ENCODE measurements at regions of chr14 and their contacts with region 1.

Region 1: GRCh38 chr14:75976826-75977581 is 4.8 kb downstream of the TGFB3 start:
- DNase-seq: no peak
- ATAC-seq: no peak
- H3K4me3 ChIP-seq: no peak overlapping the region
- H3K27ac ChIP-seq: no peak overlapping the region
- H3K4me1 ChIP-seq: peaks cover 7% of the 10 kb centered on the region; the same call in 1 of the 2 replicates
- H3K27me3 ChIP-seq: no peaks in the 10 kb centered on the region; the same call in none of the 2 replicates
- CTCF ChIP-seq: no peak
- POLR2A ChIP-seq: no peak
- RAD21 ChIP-seq: no peak

Region 2: GRCh38 chr14:75714991-75715390 is 262.0 kb before region 1 on chr14:
- CTCF ChIA-PET with region 1: interaction called, 63 read pairs
- POLR2A ChIA-PET with region 1: no interaction called
- dilution Hi-C with region 1: no loop called
- in situ Hi-C with region 1: loop called (anchors 5 kb)
- intact Hi-C with region 1: loop called (anchors 1 kb)
- DNase-seq: no peak
- ATAC-seq: no peak
- H3K4me3 ChIP-seq: no peak overlapping the region
- H3K27ac ChIP-seq: no peak overlapping the region
- H3K4me1 ChIP-seq: peaks cover 16% of the 10 kb centered on the region
- H3K27me3 ChIP-seq: peaks cover 16% of the 10 kb centered on the region; the same call in 1 of the 2 replicates
- CTCF ChIP-seq: no peak
- POLR2A ChIP-seq: no peak
- RAD21 ChIP-seq: no peak

Region 3: DNA sequence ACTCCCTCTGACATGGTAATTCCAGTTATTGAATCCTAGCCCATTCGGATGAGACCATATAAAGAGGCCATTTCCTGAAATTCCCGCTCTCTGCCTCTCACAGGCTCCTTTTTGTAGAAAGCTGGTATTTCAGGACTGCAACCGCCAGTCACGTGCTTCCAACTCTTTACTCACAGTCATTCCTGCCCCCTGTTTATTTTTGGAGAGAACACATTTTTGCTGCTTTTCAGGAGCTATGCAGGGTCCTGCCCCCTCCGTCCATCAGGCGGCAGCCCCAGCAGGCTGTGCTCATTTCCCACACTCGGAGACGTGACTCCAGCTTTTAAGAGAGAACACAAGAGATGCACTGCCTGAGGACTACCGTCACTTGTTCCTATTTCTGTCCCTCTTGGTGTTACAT is 35.4 kb after region 1 on chr14:
- CTCF ChIA-PET with region 1: no interaction called
- POLR2A ChIA-PET with region 1: no interaction called
- dilution Hi-C with region 1: no loop called
- in situ Hi-C with region 1: no loop called
- intact Hi-C with region 1: no loop called
- DNase-seq: peak; percentile 87
- ATAC-seq: peak; percentile 89
- H3K4me3 ChIP-seq: no peak overlapping the region
- H3K27ac ChIP-seq: peak overlapping the region; percentile 4; the same call in 1 of the 2 replicates
- H3K4me1 ChIP-seq: peaks cover 16% of the 10 kb centered on the region
- H3K27me3 ChIP-seq: no peaks in the 10 kb centered on the region
- CTCF ChIP-seq: 0 out of 2 replicates have a peak, but pooled peaks have one; percentile 10
- POLR2A ChIP-seq: no peak
- RAD21 ChIP-seq: peak; percentile 3; the same call in 1 of the 2 replicates

Region 4: GRCh38 chr14:76034566-76034965 is 57.6 kb after region 1 on chr14:
- CTCF ChIA-PET with region 1: no interaction called
- POLR2A ChIA-PET with region 1: interaction called, 10 read pairs
- dilution Hi-C with region 1: no loop called
- in situ Hi-C with region 1: no loop called
- intact Hi-C with region 1: no loop called
- DNase-seq: no peak
- ATAC-seq: no peak
- H3K4me3 ChIP-seq: no peak overlapping the region
- H3K27ac ChIP-seq: no peak overlapping the region
- H3K4me1 ChIP-seq: no peaks in the 10 kb centered on the region
- H3K27me3 ChIP-seq: no peaks in the 10 kb centered on the region
- CTCF ChIP-seq: no peak
- POLR2A ChIP-seq: no peak
- RAD21 ChIP-seq: no peak

Region 5: DNA sequence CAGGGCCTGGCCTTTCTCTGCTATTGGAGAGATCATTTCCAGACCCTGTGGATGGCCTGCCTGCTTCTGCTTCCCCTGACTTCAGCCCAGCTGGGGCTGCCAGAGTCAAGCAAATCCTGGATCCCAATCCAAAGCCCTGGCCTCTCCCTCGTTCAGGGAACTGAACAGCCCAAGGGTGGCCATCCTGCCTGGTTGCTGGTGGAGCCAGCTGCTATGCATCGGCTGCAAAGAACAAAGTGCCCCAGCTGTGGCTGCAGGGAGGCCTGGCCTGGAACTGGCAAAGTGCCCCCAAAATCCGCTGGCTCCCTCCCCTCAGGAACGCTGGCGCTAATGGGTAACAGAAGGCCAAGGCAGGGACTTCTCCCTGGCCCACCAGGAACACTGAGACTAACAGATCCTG is 905.6 kb after region 1 on chr14:
- CTCF ChIA-PET with region 1: no interaction called
- POLR2A ChIA-PET with region 1: no interaction called
- dilution Hi-C with region 1: no loop called
- in situ Hi-C with region 1: no loop called
- intact Hi-C with region 1: no loop called
- DNase-seq: no peak
- ATAC-seq: no peak
- H3K4me3 ChIP-seq: no peak overlapping the region
- H3K27ac ChIP-seq: no peak overlapping the region
- H3K4me1 ChIP-seq: peaks cover 2% of the 10 kb centered on the region; the same call in 1 of the 2 replicates
- H3K27me3 ChIP-seq: peaks cover 6% of the 10 kb centered on the region; the same call in 1 of the 2 replicates
- CTCF ChIP-seq: no peak
- POLR2A ChIP-seq: no peak
- RAD21 ChIP-seq: no peak